ENCODE measurements at regions of chr11 and their contacts with region 1.

Region 1: GRCh38 chr11:117099696-117100095 is 1.5 kb upstream of the SIK3 start:
- DNase-seq: no peak
- H3K4me3 ChIP-seq: no peak overlapping the region
- H3K4me1 ChIP-seq: peaks cover 24% of the 10 kb centered on the region
- H3K27me3 ChIP-seq: no peaks in the 10 kb centered on the region

Region 2: GRCh38 chr11:116791002-116791812 is 308.5 kb before region 1 on chr11:
- in situ Hi-C with region 1: loop called (anchors 5 kb)
- DNase-seq: peak; percentile 62 to 90
- H3K4me3 ChIP-seq: no peak overlapping the region
- H3K4me1 ChIP-seq: peaks cover 8% of the 10 kb centered on the region
- H3K27me3 ChIP-seq: no peaks in the 10 kb centered on the region

Region 3: DNA sequence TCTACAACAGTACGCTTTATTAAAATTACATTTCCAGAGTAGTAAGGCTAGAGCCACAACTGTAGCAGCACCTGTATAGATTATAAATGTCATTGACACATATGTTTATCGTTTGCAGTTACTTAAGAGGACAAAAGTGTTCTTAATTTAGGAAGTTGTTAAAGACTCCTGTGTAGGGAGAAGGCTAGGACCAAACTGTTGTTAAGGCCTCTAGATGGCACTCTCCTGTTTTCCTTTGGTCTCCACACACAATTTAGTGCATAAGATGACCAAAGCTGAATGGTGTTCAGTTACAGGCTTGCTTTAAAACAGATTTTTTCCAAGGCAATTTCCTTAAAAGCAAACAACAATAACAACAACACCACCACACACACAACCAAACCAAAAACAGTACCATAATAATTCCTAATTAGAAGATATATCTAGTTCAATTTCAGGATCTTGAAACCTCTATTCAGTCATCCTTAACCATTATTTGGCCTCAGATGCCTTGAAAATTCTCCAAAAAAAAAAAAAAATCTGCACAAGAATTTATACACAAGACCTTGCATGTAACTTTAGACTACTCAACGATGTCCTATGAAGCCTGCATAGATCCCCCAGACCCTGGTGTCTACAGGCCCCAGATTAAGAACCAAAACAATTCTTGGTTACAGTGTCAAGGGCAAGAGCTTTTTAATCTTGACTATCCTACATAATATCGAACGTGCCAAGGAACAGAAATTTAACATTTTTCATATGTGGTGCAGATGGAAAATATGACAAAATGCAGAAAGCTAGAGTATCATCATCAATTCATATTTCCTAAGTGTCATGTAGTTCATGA is 219.7 kb before region 1 on chr11:
- in situ Hi-C with region 1: loop called (anchors 5 kb)
- DNase-seq: peak; percentile 20 to 70
- H3K4me3 ChIP-seq: no peak overlapping the region
- H3K4me1 ChIP-seq: no peaks in the 10 kb centered on the region
- H3K27me3 ChIP-seq: no peaks in the 10 kb centered on the region